ENCODE measurements at regions of chr7 and their contacts with region 1.

Region 1: GRCh38 chr7:94223375-94224070 is 171.2 kb upstream of the COL1A2 start:
- DNase-seq: peak; percentile 39 to 43
- H3K4me3 ChIP-seq: no peak overlapping the region
- H3K4me3 Mint-ChIP-seq: no peak overlapping the region
- H3K27ac Mint-ChIP-seq: no peak overlapping the region
- H3K4me1 ChIP-seq: 0 out of 2 replicates have a peak, but pooled peaks cover 2% of the 10 kb centered on the region
- H3K4me1 Mint-ChIP-seq: peaks cover 9% of the 10 kb centered on the region
- H3K27me3 ChIP-seq: no peaks in the 10 kb centered on the region
- H3K27me3 Mint-ChIP-seq: no peaks in the 10 kb centered on the region
- CTCF ChIP-seq: peak; percentile 16 to 17

Region 2: DNA sequence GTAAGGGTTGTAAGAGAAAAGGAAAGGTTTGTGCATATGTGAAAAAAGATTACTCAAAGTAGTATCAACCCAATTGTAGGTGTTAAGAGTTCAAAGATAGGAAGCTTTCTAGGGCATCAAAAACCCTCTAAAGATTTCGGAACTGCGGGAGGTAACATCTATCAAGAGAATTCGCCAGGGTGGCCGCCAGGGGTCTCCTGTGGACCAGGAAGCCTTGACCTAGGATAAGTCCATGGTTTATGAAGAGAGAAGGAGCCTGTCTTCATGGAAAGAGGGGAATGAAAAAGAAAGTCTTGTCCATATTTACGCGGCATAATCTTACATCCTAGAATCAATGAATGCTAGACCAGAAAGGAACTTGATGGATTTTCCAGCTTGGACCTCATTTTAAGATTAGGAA is 508.3 kb before region 1 on chr7:
- CTCF ChIA-PET with region 1: no interaction called
- POLR2A ChIA-PET with region 1: no interaction called
- intact Hi-C with region 1: loop called (anchors 2 kb)
- DNase-seq: peak; percentile 58 to 71
- H3K4me3 ChIP-seq: no peak overlapping the region
- H3K4me3 Mint-ChIP-seq: no peak overlapping the region
- H3K27ac Mint-ChIP-seq: no peak overlapping the region
- H3K4me1 ChIP-seq: peaks cover 12% of the 10 kb centered on the region
- H3K4me1 Mint-ChIP-seq: no peaks in the 10 kb centered on the region
- H3K27me3 ChIP-seq: no peaks in the 10 kb centered on the region
- H3K27me3 Mint-ChIP-seq: no peaks in the 10 kb centered on the region
- CTCF ChIP-seq: peak; percentile 70 to 82

Region 3: GRCh38 chr7:93799750-93800357 is 423.7 kb before region 1 on chr7:
- CTCF ChIA-PET with region 1: no interaction called
- POLR2A ChIA-PET with region 1: no interaction called
- intact Hi-C with region 1: loop called (anchors 1 kb)
- DNase-seq: no peak
- H3K4me3 ChIP-seq: no peak overlapping the region
- H3K4me3 Mint-ChIP-seq: no peak overlapping the region
- H3K27ac Mint-ChIP-seq: no peak overlapping the region
- H3K4me1 ChIP-seq: no peaks in the 10 kb centered on the region
- H3K4me1 Mint-ChIP-seq: no peaks in the 10 kb centered on the region
- H3K27me3 ChIP-seq: no peaks in the 10 kb centered on the region
- H3K27me3 Mint-ChIP-seq: peaks cover 3% of the 10 kb centered on the region
- CTCF ChIP-seq: peak; percentile 32 to 36

Region 4: DNA sequence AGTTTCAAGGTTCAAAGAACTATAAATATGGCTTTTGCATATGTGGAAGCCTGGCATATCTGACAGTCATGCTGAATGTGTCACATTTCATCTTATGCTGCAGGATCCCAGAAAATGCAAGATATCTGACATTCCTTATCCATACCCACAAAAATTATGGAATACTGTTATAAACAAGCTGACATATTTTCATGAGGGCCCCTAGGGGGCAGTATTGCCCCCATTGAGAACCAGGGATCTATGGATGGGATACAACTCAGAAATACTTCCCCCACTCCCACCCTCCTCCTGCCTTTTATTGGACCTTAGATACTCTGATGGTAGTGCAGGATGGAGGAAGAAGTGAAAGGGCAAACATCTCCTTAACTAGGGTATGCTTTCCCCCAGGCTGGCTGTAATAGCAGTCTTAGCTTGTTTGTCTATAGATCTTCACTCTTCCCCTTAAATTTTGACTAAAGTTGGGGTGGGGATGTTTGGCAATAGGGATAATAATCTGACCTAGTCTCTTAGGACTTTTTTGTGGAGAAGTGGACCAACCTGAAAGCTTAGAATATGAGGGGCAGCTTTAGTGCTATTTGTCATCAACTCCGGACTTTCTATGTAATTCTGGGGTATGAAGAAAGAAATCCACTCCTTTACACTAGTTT is 320.6 kb before region 1 on chr7:
- CTCF ChIA-PET with region 1: no interaction called
- POLR2A ChIA-PET with region 1: no interaction called
- intact Hi-C with region 1: loop called (anchors 5 kb)
- DNase-seq: no peak
- H3K4me3 ChIP-seq: no peak overlapping the region
- H3K4me3 Mint-ChIP-seq: no peak overlapping the region
- H3K27ac Mint-ChIP-seq: no peak overlapping the region
- H3K4me1 ChIP-seq: peaks cover under 1% of the 10 kb centered on the region; the same call in 1 of the 2 replicates
- H3K4me1 Mint-ChIP-seq: peaks cover 1% of the 10 kb centered on the region
- H3K27me3 ChIP-seq: no peaks in the 10 kb centered on the region; the same call in 1 of the 2 replicates
- H3K27me3 Mint-ChIP-seq: peaks cover 3% of the 10 kb centered on the region
- CTCF ChIP-seq: peak; percentile 56 to 60

Region 5: GRCh38 chr7:94145602-94146001 is 77.9 kb before region 1 on chr7:
- CTCF ChIA-PET with region 1: no interaction called
- POLR2A ChIA-PET with region 1: no interaction called
- intact Hi-C with region 1: no loop called
- DNase-seq: no peak
- H3K4me3 ChIP-seq: no peak overlapping the region
- H3K4me3 Mint-ChIP-seq: no peak overlapping the region
- H3K27ac Mint-ChIP-seq: no peak overlapping the region
- H3K4me1 ChIP-seq: no peaks in the 10 kb centered on the region
- H3K4me1 Mint-ChIP-seq: no peaks in the 10 kb centered on the region
- H3K27me3 ChIP-seq: no peaks in the 10 kb centered on the region; the same call in 1 of the 2 replicates
- H3K27me3 Mint-ChIP-seq: peaks cover 19% of the 10 kb centered on the region
- CTCF ChIP-seq: no peak

Region 6: GRCh38 chr7:94452239-94452638 is 228.7 kb after region 1 on chr7:
- CTCF ChIA-PET with region 1: no interaction called
- POLR2A ChIA-PET with region 1: no interaction called
- intact Hi-C with region 1: no loop called
- DNase-seq: no peak
- H3K4me3 ChIP-seq: no peak overlapping the region
- H3K4me3 Mint-ChIP-seq: no peak overlapping the region
- H3K27ac Mint-ChIP-seq: no peak overlapping the region
- H3K4me1 ChIP-seq: no peaks in the 10 kb centered on the region
- H3K4me1 Mint-ChIP-seq: peaks cover 7% of the 10 kb centered on the region
- H3K27me3 ChIP-seq: no peaks in the 10 kb centered on the region
- H3K27me3 Mint-ChIP-seq: no peaks in the 10 kb centered on the region
- CTCF ChIP-seq: no peak

Measured in Caco-2 (cell line).